A549 (cell line): ENCODE measurements at regions of chr1 and their contacts with region 1.

Region 1: GRCh38 chr1:226121587-226122400 is 59.3 kb downstream of the H3-3A start:
- DNase-seq: peak; percentile 67 to 88
- ATAC-seq: peak; percentile 72 to 77
- H3K4me3 ChIP-seq: peak overlapping the region; percentile 62
- H3K27ac ChIP-seq: peak overlapping the region; percentile 90 to 98
- H3K4me1 ChIP-seq: peaks cover 31% of the 10 kb centered on the region
- CTCF ChIP-seq: peak; percentile 99
- EP300 ChIP-seq: no peak
- POLR2A ChIP-seq: peak; percentile 45
- RAD21 ChIP-seq: peak; percentile 41 to 85; a peak in 4 of 5 replicates

Region 2: DNA sequence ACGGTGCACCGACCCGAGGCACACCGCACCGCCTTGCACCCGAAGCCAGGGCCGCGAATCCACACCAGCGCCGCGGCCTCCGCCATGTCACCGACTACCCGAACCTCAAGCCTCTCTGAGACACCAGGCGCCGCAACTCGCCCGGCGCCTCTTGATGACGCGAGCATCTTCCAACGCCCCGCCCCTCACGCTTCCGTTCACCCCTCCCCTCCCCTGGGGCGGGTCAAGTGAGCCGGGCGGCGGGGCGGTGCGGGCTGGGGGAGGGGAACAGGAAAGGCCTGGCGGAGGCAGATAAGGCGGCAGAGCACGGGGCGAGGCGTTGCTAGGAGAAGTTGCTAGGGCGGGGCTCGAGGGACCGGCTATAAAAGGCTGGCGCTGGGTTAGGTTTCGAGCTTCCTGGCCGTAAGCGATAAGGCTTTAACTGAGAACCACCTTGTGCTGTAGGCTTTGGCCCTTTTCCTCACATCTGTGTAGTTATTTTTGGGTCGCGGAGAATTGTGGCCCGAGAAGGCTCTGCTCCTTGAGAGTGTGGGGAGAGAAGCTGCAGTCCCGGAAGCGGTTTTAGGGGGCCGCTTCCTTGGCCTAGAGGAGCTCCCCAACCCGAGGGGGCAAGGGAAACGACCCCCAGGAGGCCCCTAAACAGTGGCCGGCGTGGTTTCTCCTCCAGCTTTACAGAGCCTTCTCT is 122.4 kb before region 1 on chr1 and contains the start of gene SDE2:
- CTCF ChIA-PET with region 1: no interaction called
- POLR2A ChIA-PET with region 1: no interaction called
- DNase-seq: peak; percentile 88 to 99
- ATAC-seq: peak; percentile 94 to 96
- H3K4me3 ChIP-seq: peak within 1 kb of the TSS; percentile 66
- H3K27ac ChIP-seq: peak within 1 kb of the TSS; percentile 77 to 94
- H3K4me1 ChIP-seq: peaks cover 35% of the 10 kb centered on the region; the same call in 2 of the 3 replicates
- CTCF ChIP-seq: no peak
- EP300 ChIP-seq: no peak
- POLR2A ChIP-seq: peak; percentile 82
- RAD21 ChIP-seq: no peak
- polyA plus RNA-seq, gene SDE2: 15.6 and 24.8 TPM in 2 replicates

Region 3: DNA sequence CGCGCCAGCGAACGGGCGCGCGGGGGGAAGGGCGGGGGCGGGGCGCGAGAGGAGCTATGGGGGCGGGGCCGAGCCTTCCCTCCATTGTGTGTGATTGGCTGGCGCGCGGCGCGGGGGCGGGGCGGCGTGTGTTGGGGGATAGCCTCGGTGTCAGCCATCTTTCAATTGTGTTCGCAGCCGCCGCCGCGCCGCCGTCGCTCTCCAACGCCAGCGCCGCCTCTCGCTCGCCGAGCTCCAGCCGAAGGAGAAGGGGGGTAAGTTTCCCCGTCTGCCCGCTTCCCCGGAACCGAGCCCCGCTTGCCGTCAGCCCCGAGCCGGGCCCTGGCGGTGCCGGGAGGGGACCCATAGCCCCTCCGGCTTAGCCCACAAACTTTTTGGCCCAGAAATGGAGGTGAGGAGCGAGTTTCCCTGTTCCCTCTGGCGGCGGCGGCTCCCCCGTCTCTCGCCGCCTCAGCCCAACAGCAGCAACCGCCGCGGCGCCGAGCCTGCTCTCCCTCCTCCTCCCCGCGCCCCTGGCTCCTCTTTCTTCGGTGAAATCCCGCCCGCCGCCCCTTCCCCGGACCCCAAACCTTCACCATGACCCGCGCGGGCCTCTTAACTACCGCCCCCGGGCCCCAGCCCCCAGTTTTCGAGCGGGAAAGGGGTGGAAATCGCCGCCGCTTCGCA is 59.1 kb before region 1 on chr1 and contains the start of gene H3-3A:
- CTCF ChIA-PET with region 1: interaction called, 80 read pairs
- POLR2A ChIA-PET with region 1: interaction called, 12 read pairs
- DNase-seq: peak; percentile 81 to 96
- ATAC-seq: peak; percentile 65 to 88
- H3K4me3 ChIP-seq: peak within 1 kb of the TSS; percentile 76
- H3K27ac ChIP-seq: peak within 1 kb of the TSS; percentile 98
- H3K4me1 ChIP-seq: peaks cover 26% of the 10 kb centered on the region
- CTCF ChIP-seq: no peak
- EP300 ChIP-seq: no peak
- POLR2A ChIP-seq: peak; percentile 96
- RAD21 ChIP-seq: no peak
- polyA plus RNA-seq, gene H3-3A: 366 and 457 TPM in 2 replicates

Region 4: GRCh38 chr1:226100436-226101391 is 21.1 kb before region 1 on chr1:
- CTCF ChIA-PET with region 1: interaction called, 32 read pairs
- POLR2A ChIA-PET with region 1: no interaction called
- DNase-seq: peak; percentile 47 to 91
- ATAC-seq: peak; percentile 42 to 71; a peak in 3 of 6 replicates
- H3K4me3 ChIP-seq: peak overlapping the region; percentile 44
- H3K27ac ChIP-seq: 0 out of 6 replicates have a peak overlapping the region, but pooled peaks of 1 of the 2 experiments have one; percentile 17
- H3K4me1 ChIP-seq: no peaks in the 10 kb centered on the region
- CTCF ChIP-seq: no peak
- EP300 ChIP-seq: no peak
- POLR2A ChIP-seq: no peak
- RAD21 ChIP-seq: no peak

Region 5: DNA sequence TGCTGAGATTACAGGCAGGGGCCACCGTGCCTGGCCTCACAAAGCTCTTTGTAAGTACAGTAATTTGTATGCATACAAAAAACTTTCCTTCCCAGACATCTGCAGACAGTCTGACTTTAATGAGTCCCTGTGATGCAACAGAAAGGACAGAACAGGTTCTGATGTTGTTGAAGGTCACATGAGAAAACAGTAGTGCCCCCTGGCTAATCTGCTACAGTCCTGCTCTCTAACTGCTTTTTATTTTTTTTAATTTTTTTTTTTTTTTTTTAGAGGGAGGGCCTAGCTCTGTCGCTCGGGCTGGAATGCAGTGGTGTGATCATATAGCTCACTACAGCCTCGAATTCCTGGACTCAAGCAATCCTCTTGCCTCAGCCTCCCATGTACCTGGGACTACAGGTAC is 28.0 kb after region 1 on chr1:
- CTCF ChIA-PET with region 1: interaction called, 35 read pairs
- POLR2A ChIA-PET with region 1: no interaction called
- DNase-seq: peak in 1 of 2 experiments; percentile 37
- ATAC-seq: peak in 1 of 2 experiments; percentile 60; a peak in 3 of 6 replicates
- H3K4me3 ChIP-seq: no peak overlapping the region
- H3K27ac ChIP-seq: no peak overlapping the region
- H3K4me1 ChIP-seq: no peaks in the 10 kb centered on the region
- CTCF ChIP-seq: no peak
- EP300 ChIP-seq: no peak
- POLR2A ChIP-seq: no peak
- RAD21 ChIP-seq: no peak

Region 6: DNA sequence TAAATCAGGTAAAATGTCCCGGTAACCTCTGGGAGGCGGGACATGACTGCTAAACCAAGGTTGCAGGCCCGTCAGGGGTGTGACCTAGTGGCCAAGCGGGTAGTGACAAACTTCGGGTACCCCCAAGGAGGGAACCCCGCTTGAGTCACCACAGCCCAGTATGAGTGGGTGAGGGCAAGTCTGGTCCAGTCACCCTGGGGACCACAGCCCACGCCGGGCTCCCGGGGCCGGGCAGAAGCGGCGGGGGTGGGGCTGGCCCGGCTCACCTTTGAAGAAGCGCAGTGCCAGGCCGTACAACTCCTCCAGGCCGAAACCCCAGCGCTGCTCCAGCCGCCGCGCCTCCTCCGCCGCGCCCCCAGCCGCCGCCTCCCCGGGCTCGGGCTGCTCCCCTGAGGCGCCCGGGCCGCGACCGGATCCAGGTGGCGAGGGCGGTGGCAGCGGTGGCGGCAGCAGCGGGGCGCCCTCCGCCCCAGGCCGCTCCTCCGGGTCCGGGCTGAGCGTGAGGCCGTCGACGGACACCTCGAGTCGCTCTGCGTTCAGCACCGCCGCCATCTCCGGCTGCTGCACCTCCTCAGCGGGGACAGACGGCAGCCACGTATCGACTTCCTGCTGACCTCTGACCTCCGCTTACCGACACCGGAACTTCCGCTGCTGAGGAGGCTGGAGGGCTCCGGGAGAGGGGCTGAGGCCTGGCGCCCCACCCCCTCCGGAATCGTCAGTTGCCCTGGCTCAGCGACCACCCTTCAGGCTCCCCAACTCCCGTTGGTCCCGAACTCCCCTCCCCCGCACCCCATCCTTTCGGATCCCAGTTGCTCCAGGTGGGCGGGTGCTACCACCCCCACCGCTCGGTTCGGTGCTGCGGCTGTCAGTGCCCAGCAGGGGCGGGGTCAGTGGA is 64.6 kb after region 1 on chr1 and contains the start of gene ACBD3:
- CTCF ChIA-PET with region 1: interaction called, 122 read pairs
- POLR2A ChIA-PET with region 1: no interaction called
- DNase-seq: peak; percentile 88 to 89
- ATAC-seq: peak; percentile 97 to 99
- H3K4me3 ChIP-seq: peak within 1 kb of the TSS; percentile 73
- H3K27ac ChIP-seq: peak within 1 kb of the TSS; percentile 85 to 97
- H3K4me1 ChIP-seq: peaks cover 32% of the 10 kb centered on the region
- CTCF ChIP-seq: no peak
- EP300 ChIP-seq: no peak
- POLR2A ChIP-seq: peak; percentile 96
- RAD21 ChIP-seq: no peak
- polyA plus RNA-seq, gene ACBD3: 42.4 and 52.9 TPM in 2 replicates

Region 7: DNA sequence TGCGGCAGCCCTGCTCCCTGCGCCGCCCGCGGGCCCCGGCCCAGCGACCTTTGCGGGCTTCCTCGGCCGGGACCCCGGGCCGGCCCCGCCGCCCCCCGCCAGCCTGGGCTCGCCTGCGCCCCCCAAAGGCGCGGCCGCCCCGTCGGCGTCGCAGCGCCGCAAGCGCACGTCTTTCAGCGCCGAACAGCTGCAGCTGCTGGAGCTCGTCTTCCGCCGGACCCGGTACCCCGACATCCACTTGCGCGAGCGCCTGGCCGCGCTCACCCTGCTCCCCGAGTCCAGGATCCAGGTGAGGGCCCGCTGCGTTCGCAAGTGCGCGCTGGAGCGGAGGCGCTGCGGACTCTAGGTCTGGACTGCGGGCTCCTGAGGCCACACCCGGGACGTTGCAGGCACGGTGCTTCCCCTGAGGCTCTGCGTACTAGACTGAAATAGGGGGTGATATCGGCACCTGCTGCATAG is 102.0 kb after region 1 on chr1:
- CTCF ChIA-PET with region 1: interaction called, 19 read pairs
- POLR2A ChIA-PET with region 1: no interaction called
- DNase-seq: peak in 1 of 2 experiments; percentile 15
- ATAC-seq: peak; percentile 75 to 78
- H3K4me3 ChIP-seq: peak overlapping the region; percentile 56
- H3K27ac ChIP-seq: peak overlapping the region; percentile 37 to 77; a peak in 5 of 6 replicates
- H3K4me1 ChIP-seq: no peaks in the 10 kb centered on the region
- CTCF ChIP-seq: peak; percentile 50
- EP300 ChIP-seq: no peak
- POLR2A ChIP-seq: no peak
- RAD21 ChIP-seq: no peak

Region 8: GRCh38 chr1:226407497-226408284 is 285.9 kb after region 1 on chr1 and contains the start of gene PARP1:
- CTCF ChIA-PET with region 1: interaction called, 20 read pairs
- POLR2A ChIA-PET with region 1: interaction called, 3 read pairs
- DNase-seq: peak; percentile 84 to 89
- ATAC-seq: peak; percentile 84 to 89
- H3K4me3 ChIP-seq: peak within 1 kb of the TSS; percentile 67
- H3K27ac ChIP-seq: peak within 1 kb of the TSS; percentile 74 to 95
- H3K4me1 ChIP-seq: peaks cover 31% of the 10 kb centered on the region
- CTCF ChIP-seq: peak; percentile 87
- EP300 ChIP-seq: no peak
- POLR2A ChIP-seq: peak; percentile 83
- RAD21 ChIP-seq: no peak
- polyA plus RNA-seq, gene PARP1: 134 and 144 TPM in 2 replicates